CD4-positive, alpha-beta T cell (primary cell): ENCODE measurements at regions of chr5 and their contacts with region 1.

Region 1: DNA sequence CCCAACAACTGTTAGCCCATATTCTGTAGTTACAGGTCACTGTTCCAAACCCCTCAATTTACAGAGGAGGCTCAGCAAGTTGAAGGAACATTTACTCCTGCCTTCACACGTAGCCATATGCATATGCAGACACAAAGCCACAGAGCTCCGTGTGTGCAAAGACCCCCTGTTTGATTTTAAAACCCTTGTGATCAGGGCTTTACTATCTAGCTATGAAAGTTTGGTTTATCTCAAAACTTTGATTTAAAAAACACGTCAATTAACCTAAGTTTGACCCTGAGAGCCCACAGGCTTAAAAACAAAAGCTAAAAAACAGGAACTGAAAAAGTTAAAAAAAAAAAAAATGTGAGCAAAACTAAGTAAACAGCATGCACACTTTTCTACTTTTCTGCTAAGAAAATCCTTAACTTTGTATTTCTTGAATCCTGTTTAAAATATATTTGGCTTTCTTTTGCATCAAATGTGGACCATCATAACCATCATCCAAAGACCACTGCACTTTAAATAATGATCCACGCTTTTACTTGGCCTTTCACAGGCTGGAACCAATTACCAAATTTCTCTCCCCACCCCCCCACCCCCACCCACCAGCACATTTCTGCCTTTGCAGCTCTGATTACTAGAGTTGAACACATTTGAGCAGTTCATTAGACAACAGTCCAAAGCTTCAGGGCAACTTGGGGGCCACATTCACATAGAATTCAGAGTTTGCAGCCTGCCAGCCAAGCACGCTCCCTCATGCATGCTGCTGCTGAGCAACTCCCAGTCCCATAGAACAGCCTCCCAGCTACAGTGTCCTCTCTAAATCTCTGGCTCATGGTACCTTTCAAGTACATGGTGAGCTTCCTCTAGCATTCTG is 128.8 kb upstream of the MAP3K1 start:
- DNase-seq: peak in 2 of 14 experiments; percentile 22 to 59
- ATAC-seq: peak; percentile 65
- H3K4me3 ChIP-seq: no peak overlapping the region
- H3K4me3 Mint-ChIP-seq: peak overlapping the region; percentile 61
- H3K27ac ChIP-seq: peak overlapping the region in 1 of 2 donors; percentile 30
- H3K27ac Mint-ChIP-seq: peak overlapping the region; percentile 82
- H3K4me1 ChIP-seq: peaks cover 64% of the 10 kb centered on the region
- H3K4me1 Mint-ChIP-seq: peaks cover 100% of the 10 kb centered on the region
- H3K27me3 ChIP-seq: no peaks in the 10 kb centered on the region
- H3K27me3 Mint-ChIP-seq: no peaks in the 10 kb centered on the region
- CTCF ChIP-seq: no peak

Region 2: GRCh38 chr5:55836191-55836590 is 850.4 kb before region 1 on chr5:
- CTCF ChIA-PET with region 1: no interaction called
- POLR2A ChIA-PET with region 1: no interaction called
- intact Hi-C with region 1: no loop called
- DNase-seq: no peak
- ATAC-seq: no peak
- H3K4me3 ChIP-seq: no peak overlapping the region
- H3K4me3 Mint-ChIP-seq: no peak overlapping the region
- H3K27ac ChIP-seq: no peak overlapping the region
- H3K27ac Mint-ChIP-seq: no peak overlapping the region
- H3K4me1 ChIP-seq: no peaks in the 10 kb centered on the region
- H3K4me1 Mint-ChIP-seq: no peaks in the 10 kb centered on the region
- H3K27me3 ChIP-seq: no peaks in the 10 kb centered on the region
- H3K27me3 Mint-ChIP-seq: peaks cover 4% of the 10 kb centered on the region
- CTCF ChIP-seq: no peak

Region 3: DNA sequence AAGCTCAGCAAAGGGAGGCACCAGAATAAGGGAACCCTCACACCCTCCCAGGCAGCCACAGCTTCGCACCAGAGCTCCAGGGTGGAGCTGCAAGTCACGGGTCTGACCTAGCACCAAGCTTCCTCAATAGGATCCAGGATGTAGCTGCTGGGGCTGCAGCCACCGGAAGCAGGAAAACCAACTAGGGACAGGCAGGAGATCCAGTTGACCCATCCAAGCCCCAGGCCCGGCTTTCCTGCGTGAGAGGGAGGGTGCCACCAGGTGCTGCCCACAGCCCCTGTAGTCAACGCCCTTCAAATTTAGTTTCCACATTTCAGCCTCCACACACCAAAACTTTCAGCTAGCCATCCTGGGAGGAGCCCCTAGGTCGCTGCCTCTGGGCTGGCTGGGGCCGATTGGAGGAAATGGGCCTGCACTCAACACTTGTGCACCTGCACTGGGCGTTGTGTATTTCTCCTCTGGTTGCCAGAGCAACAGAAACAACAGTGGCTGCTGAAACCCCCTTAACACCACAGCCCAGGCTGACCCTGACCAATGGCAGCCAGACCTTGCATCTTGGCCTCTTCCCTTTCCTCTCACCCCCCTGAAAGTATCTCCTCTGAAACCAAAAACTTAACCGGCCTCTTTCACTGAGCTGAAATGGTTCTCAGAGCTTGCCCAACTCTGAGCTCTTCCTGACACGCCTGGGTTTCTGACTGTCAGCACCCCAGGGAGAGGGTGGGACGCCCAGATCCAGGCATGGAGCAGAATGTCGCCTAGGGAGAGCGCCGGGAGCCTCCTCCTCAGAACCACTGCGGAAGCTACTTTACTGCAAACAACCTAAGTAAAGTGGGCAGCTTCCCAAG is 97.7 kb before region 1 on chr5:
- CTCF ChIA-PET with region 1: no interaction called
- POLR2A ChIA-PET with region 1: interaction called, 10 read pairs
- intact Hi-C with region 1: no loop called
- DNase-seq: peak; percentile 32 to 92 (median 60)
- ATAC-seq: peak; percentile 72
- H3K4me3 ChIP-seq: no peak overlapping the region
- H3K4me3 Mint-ChIP-seq: peak overlapping the region; percentile 52
- H3K27ac ChIP-seq: peak overlapping the region; percentile 60 to 95
- H3K27ac Mint-ChIP-seq: peak overlapping the region; percentile 87
- H3K4me1 ChIP-seq: peaks cover 51% of the 10 kb centered on the region
- H3K4me1 Mint-ChIP-seq: peaks cover 62% of the 10 kb centered on the region
- H3K27me3 ChIP-seq: no peaks in the 10 kb centered on the region
- H3K27me3 Mint-ChIP-seq: no peaks in the 10 kb centered on the region
- CTCF ChIP-seq: no peak

Region 4: DNA sequence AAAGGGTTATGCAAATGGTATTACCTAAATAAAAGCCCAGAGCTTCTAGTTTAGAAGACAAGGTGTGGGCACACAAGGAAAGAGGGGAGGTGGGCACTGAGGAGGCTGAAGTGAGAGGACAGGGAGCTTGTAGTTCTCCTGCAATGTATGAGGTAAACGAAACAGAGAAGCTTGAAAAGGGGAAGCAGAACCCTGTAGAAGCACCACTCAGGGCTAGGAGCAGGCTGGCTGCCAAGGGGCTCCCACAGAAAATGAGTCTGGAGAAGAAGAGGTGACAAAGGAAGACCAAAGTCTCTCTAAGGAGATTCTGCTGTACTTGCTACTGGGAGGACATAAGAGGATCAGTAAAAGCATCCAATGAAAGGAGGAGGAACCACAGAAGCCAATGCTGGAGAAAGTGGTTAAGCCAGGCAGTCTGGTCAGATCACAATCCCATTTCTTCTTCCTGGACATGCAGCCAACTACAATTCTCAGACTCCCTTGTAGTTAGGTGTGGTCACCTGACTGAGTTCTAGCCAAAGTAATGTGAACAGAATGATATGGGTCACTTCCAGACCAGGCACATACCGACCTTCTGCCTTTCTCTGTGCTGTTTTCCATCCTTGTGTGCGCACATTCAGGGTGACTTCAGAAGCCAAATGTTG is 45.7 kb before region 1 on chr5:
- CTCF ChIA-PET with region 1: no interaction called
- POLR2A ChIA-PET with region 1: interaction called, 24 read pairs
- intact Hi-C with region 1: loop called in 1 of 2 experiments (anchors 10 kb)
- DNase-seq: peak in 2 of 14 experiments; percentile 26 to 30
- ATAC-seq: no peak
- H3K4me3 ChIP-seq: no peak overlapping the region
- H3K4me3 Mint-ChIP-seq: no peak overlapping the region
- H3K27ac ChIP-seq: no peak overlapping the region
- H3K27ac Mint-ChIP-seq: peak overlapping the region; percentile 97
- H3K4me1 ChIP-seq: peaks cover 6% of the 10 kb centered on the region
- H3K4me1 Mint-ChIP-seq: peaks cover 52% of the 10 kb centered on the region
- H3K27me3 ChIP-seq: no peaks in the 10 kb centered on the region
- H3K27me3 Mint-ChIP-seq: no peaks in the 10 kb centered on the region
- CTCF ChIP-seq: no peak

Region 5: DNA sequence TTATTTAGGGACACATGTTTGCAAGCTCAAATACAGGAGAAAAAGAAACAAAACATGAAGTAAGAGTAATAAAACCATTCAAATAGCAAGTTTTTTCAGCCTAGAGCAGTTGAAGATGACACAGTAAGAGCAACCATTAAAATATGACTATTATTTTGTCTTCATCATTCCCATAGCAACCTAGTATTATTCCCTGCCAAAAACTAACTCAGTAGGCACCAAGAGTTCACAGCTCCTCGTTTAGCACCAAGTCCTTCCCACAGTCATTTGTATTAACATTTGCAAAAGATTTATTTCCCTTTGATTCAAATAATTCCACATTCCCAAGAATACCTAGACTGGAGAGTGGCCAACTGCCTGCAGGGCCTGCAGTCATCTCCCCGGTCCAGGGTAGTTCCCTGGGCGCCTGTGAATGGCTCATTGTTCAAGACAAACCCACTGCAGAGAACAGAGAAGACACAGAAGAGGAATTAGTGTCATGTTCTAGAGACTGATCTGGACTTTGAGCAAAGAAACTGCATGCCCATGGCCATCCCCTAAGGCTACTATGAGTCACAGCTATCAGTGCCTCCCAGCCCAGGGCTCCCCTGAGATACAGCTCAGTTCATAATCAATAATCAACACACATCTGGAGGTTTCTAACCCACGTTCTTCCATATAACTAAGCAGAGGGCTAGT is 10.3 kb before region 1 on chr5:
- CTCF ChIA-PET with region 1: interaction called, 4 read pairs
- POLR2A ChIA-PET with region 1: interaction called, 43 read pairs
- intact Hi-C with region 1: no loop called
- DNase-seq: no peak
- ATAC-seq: no peak
- H3K4me3 ChIP-seq: no peak overlapping the region
- H3K4me3 Mint-ChIP-seq: no peak overlapping the region
- H3K27ac ChIP-seq: no peak overlapping the region
- H3K27ac Mint-ChIP-seq: no peak overlapping the region
- H3K4me1 ChIP-seq: peaks cover 17% of the 10 kb centered on the region
- H3K4me1 Mint-ChIP-seq: peaks cover 47% of the 10 kb centered on the region
- H3K27me3 ChIP-seq: no peaks in the 10 kb centered on the region
- H3K27me3 Mint-ChIP-seq: no peaks in the 10 kb centered on the region
- CTCF ChIP-seq: no peak

Region 6: GRCh38 chr5:56737002-56737621 is 50.5 kb after region 1 on chr5:
- CTCF ChIA-PET with region 1: no interaction called
- POLR2A ChIA-PET with region 1: interaction called, 25 read pairs
- intact Hi-C with region 1: no loop called
- DNase-seq: peak in 5 of 14 experiments; percentile 3 to 41 (median 35)
- ATAC-seq: peak; percentile 45
- H3K4me3 ChIP-seq: no peak overlapping the region
- H3K4me3 Mint-ChIP-seq: peak overlapping the region; percentile 78
- H3K27ac ChIP-seq: peak overlapping the region; percentile 55 to 76
- H3K27ac Mint-ChIP-seq: peak overlapping the region; percentile 86
- H3K4me1 ChIP-seq: peaks cover 48% of the 10 kb centered on the region
- H3K4me1 Mint-ChIP-seq: peaks cover 59% of the 10 kb centered on the region
- H3K27me3 ChIP-seq: no peaks in the 10 kb centered on the region
- H3K27me3 Mint-ChIP-seq: no peaks in the 10 kb centered on the region
- CTCF ChIP-seq: no peak